B cell (primary cell): ENCODE measurements at regions of chr2 and their contacts with region 1.

Region 1: GRCh38 chr2:27086090-27086723 is 365 bp upstream of the KHK start:
- DNase-seq: peak; percentile 97
- ATAC-seq: peak; percentile 91
- H3K4me3 ChIP-seq: peak overlapping the region in 4 of 5 experiments; percentile 62 to 91 (median 71)
- H3K4me3 Mint-ChIP-seq: peak overlapping the region; percentile 91
- H3K27ac ChIP-seq: peak overlapping the region; percentile 68 to 81
- H3K27ac Mint-ChIP-seq: peak overlapping the region; percentile 90
- H3K4me1 ChIP-seq: peaks cover 20 to 30% of the 10 kb centered on the region in 2 donors
- H3K4me1 Mint-ChIP-seq: peaks cover 24% of the 10 kb centered on the region
- H3K27me3 ChIP-seq: no peaks in the 10 kb centered on the region
- H3K27me3 Mint-ChIP-seq: no peaks in the 10 kb centered on the region
- CTCF ChIP-seq: peak; percentile 85

Region 2: GRCh38 chr2:25497918-25498407 is 1588.2 kb before region 1 on chr2:
- CTCF ChIA-PET with region 1: no interaction called
- POLR2A ChIA-PET with region 1: no interaction called
- intact Hi-C with region 1: no loop called
- DNase-seq: no peak
- ATAC-seq: no peak
- H3K4me3 ChIP-seq: no peak overlapping the region
- H3K4me3 Mint-ChIP-seq: peak overlapping the region; percentile 16
- H3K27ac ChIP-seq: peak overlapping the region in 1 of 2 donors; percentile 62
- H3K27ac Mint-ChIP-seq: peak overlapping the region; percentile 61
- H3K4me1 ChIP-seq: peaks cover 13% of the 10 kb centered on the region in 2 donors
- H3K4me1 Mint-ChIP-seq: peaks cover 19% of the 10 kb centered on the region
- H3K27me3 ChIP-seq: no peaks in the 10 kb centered on the region
- H3K27me3 Mint-ChIP-seq: no peaks in the 10 kb centered on the region
- CTCF ChIP-seq: no peak

Region 3: DNA sequence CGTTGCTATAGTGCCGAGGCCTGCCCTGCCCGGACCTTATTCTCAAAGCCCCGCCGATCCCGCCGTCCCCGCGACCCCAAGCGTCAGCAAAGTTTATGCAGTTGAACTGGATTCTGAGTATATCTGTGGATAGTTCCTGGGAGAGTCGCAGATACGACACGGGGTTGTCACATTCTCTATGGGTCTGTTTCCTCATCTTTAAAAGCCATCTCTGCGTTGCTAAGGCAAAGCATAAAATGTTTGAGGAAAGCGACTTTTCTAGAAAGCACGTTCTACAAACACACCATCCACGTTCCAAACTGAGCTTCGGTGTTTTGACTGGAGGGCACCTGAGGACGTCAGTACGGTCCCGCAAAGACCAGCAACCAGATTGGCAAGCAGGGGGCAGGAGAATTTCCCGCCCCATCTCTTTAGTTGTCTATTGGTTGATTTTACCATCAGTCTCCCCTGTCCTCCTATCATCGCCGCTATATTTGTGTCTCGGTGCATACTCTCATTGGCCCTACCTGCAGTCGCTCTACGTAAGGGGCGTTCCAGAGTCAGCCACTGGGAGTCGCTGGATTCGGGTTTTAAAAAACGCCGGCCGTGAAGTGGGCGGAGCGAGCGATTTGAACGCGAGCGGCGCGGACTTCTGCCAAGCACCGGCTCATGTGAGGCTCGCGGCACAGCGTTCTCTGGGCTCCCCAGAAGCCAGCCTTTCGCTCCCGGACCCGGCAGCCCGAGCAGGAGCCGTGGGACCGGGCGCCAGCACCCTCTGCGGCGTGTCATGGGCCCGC is 300.6 kb before region 1 on chr2 and contains the start of gene CENPA:
- CTCF ChIA-PET with region 1: no interaction called
- POLR2A ChIA-PET with region 1: no interaction called
- intact Hi-C with region 1: loop called (anchors 10 kb)
- DNase-seq: peak; percentile 98
- ATAC-seq: peak; percentile 99
- H3K4me3 ChIP-seq: peak within 1 kb of the TSS; percentile 51 to 81 (median 71)
- H3K4me3 Mint-ChIP-seq: peak within 1 kb of the TSS; percentile 93
- H3K27ac ChIP-seq: peak within 1 kb of the TSS; percentile 27 to 41
- H3K27ac Mint-ChIP-seq: peak within 1 kb of the TSS; percentile 83
- H3K4me1 ChIP-seq: peaks cover 8 to 14% of the 10 kb centered on the region in 2 donors
- H3K4me1 Mint-ChIP-seq: peaks cover 13% of the 10 kb centered on the region
- H3K27me3 ChIP-seq: no peaks in the 10 kb centered on the region
- H3K27me3 Mint-ChIP-seq: peaks cover 3% of the 10 kb centered on the region
- CTCF ChIP-seq: peak; percentile 7
- total RNA-seq, gene CENPA: not detected in 2 replicates

Region 4: DNA sequence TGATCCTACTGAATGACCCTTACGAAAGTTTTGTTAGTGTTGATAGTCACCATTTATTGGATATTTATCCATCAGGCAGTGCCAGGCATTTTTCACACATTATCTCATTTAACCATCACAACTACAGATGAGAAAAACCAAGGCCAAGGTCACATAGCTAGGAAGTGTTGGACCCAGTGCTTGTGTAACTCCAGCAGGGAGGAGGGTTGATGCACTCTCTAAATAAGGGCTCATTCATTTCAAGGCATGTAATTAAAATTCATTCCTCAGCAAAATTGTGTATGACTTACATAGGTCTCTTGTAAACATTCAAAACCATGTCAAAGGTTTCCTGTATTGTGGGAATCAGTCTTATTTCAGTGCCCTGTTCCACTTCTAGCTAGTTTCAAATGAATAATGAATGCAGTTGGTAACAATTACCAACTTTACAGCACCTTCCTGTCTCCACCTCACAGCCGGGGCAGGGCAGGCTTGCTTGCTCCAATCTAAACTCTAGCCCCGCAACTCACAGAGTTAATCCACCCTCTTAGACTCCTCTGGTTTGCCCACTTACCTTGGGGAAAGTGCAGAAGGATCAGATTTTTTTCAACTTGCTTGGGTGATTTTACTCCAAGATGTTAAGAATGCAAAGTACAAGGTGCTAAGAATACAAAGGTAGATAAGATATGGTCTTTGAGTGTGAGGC is 121.6 kb before region 1 on chr2:
- CTCF ChIA-PET with region 1: interaction called, 14 read pairs
- POLR2A ChIA-PET with region 1: interaction called, 5 read pairs
- intact Hi-C with region 1: loop called (anchors 5 kb)
- DNase-seq: no peak
- ATAC-seq: no peak
- H3K4me3 ChIP-seq: no peak overlapping the region
- H3K4me3 Mint-ChIP-seq: no peak overlapping the region
- H3K27ac ChIP-seq: no peak overlapping the region
- H3K27ac Mint-ChIP-seq: no peak overlapping the region
- H3K4me1 ChIP-seq: no peaks in the 10 kb centered on the region
- H3K4me1 Mint-ChIP-seq: peaks cover 5% of the 10 kb centered on the region
- H3K27me3 ChIP-seq: peaks cover 2 to 14% (median 8%) of the 10 kb centered on the region in 4 experiments
- H3K27me3 Mint-ChIP-seq: peaks cover 39% of the 10 kb centered on the region
- CTCF ChIP-seq: no peak

Region 5: GRCh38 chr2:27050281-27050995 is 35.8 kb before region 1 on chr2:
- CTCF ChIA-PET with region 1: interaction called, 27 read pairs
- POLR2A ChIA-PET with region 1: interaction called, 15 read pairs
- intact Hi-C with region 1: loop called (anchors 1 kb)
- DNase-seq: peak; percentile 98
- ATAC-seq: peak; percentile 60
- H3K4me3 ChIP-seq: peak overlapping the region; percentile 57 to 94 (median 81)
- H3K4me3 Mint-ChIP-seq: peak overlapping the region; percentile 95
- H3K27ac ChIP-seq: peak overlapping the region; percentile 72 to 80
- H3K27ac Mint-ChIP-seq: peak overlapping the region; percentile 100
- H3K4me1 ChIP-seq: peaks cover 4 to 15% of the 10 kb centered on the region in 2 donors
- H3K4me1 Mint-ChIP-seq: peaks cover 17% of the 10 kb centered on the region
- H3K27me3 ChIP-seq: no peaks in the 10 kb centered on the region
- H3K27me3 Mint-ChIP-seq: peaks cover 7% of the 10 kb centered on the region
- CTCF ChIP-seq: peak; percentile 50

Region 6: DNA sequence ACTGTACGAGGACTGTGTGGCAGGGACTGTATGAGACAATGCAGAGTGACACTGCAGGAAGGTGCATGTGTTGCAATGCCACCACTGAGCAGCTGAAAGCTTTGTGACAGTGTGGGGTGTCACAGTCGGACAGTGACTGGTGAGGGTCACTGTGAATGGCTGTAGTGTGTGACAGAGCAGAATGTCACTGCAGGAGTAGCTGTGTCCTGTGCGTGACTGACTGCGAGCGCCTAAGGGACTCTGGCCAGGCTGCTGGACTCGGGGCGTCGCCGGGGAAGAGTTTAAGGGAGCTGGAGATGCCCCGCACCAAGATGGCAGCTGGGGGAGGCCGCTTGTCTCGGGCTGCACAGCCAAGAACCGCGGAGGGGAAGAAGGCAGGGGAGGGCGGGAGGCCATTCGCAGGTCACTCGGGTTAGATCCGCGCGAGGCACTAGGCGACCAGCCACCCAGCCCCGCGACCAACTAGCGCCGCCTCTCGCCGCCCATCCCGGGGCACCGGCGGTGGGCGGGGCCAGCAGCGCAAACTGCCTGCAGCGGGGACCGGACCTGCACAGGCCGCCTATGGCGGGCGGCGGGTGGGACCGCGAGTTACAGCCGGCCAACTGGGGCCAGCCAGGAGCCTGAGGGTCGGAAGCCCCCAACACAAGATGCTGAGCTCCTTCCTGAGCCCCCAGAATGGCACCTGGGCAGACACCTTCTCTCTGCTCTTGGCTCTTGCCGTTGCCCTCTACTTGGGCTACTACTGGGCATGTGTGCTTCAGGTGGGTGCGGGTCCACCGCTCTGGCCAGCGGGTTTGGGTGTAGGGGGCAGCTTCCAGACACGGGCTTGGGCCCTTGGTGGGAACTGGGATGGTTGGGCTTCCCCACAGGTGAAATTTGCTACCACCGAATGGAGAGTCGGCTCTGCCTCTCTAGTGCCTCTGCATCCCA is 37.4 kb after region 1 on chr2 and contains the start of gene ABHD1:
- CTCF ChIA-PET with region 1: interaction called, 3 read pairs
- POLR2A ChIA-PET with region 1: no interaction called
- intact Hi-C with region 1: loop called (anchors 1 kb)
- DNase-seq: peak; percentile 71
- ATAC-seq: peak; percentile 87
- H3K4me3 ChIP-seq: peak within 1 kb of the TSS; percentile 58 to 74 (median 68)
- H3K4me3 Mint-ChIP-seq: peak within 1 kb of the TSS; percentile 93
- H3K27ac ChIP-seq: no peak within 1 kb of the TSS
- H3K27ac Mint-ChIP-seq: peak within 1 kb of the TSS; percentile 87
- H3K4me1 ChIP-seq: peaks cover 17% of the 10 kb centered on the region in 2 donors
- H3K4me1 Mint-ChIP-seq: peaks cover 18% of the 10 kb centered on the region
- H3K27me3 ChIP-seq: peaks cover 0 to 16% (median 6%) of the 10 kb centered on the region in 4 experiments
- H3K27me3 Mint-ChIP-seq: peaks cover 32% of the 10 kb centered on the region
- CTCF ChIP-seq: no peak
- total RNA-seq, gene ABHD1: 0.73 and 1.5 TPM in 2 replicates

Region 7: GRCh38 chr2:27182346-27182745 is 96.1 kb after region 1 on chr2:
- CTCF ChIA-PET with region 1: no interaction called
- POLR2A ChIA-PET with region 1: no interaction called
- intact Hi-C with region 1: no loop called
- DNase-seq: no peak
- ATAC-seq: no peak
- H3K4me3 ChIP-seq: no peak overlapping the region
- H3K4me3 Mint-ChIP-seq: no peak overlapping the region
- H3K27ac ChIP-seq: no peak overlapping the region
- H3K27ac Mint-ChIP-seq: no peak overlapping the region
- H3K4me1 ChIP-seq: no peaks in the 10 kb centered on the region
- H3K4me1 Mint-ChIP-seq: no peaks in the 10 kb centered on the region
- H3K27me3 ChIP-seq: peaks cover 0 to 14% (median 6%) of the 10 kb centered on the region in 4 experiments
- H3K27me3 Mint-ChIP-seq: peaks cover 38% of the 10 kb centered on the region
- CTCF ChIP-seq: no peak

Region 8: GRCh38 chr2:27217217-27218121 is 131.3 kb after region 1 on chr2 and contains the start of gene CAD:
- CTCF ChIA-PET with region 1: interaction called, 3 read pairs
- POLR2A ChIA-PET with region 1: interaction called, 5 read pairs
- intact Hi-C with region 1: loop called (anchors 1 kb)
- DNase-seq: peak; percentile 89
- ATAC-seq: peak; percentile 86
- H3K4me3 ChIP-seq: peak within 1 kb of the TSS; percentile 11 to 85 (median 79)
- H3K4me3 Mint-ChIP-seq: peak within 1 kb of the TSS; percentile 98
- H3K27ac ChIP-seq: peak within 1 kb of the TSS; percentile 70 to 74
- H3K27ac Mint-ChIP-seq: peak within 1 kb of the TSS; percentile 87
- H3K4me1 ChIP-seq: peaks cover 28 to 33% of the 10 kb centered on the region in 2 donors
- H3K4me1 Mint-ChIP-seq: peaks cover 44% of the 10 kb centered on the region
- H3K27me3 ChIP-seq: no peaks in the 10 kb centered on the region
- H3K27me3 Mint-ChIP-seq: no peaks in the 10 kb centered on the region
- CTCF ChIP-seq: no peak
- total RNA-seq, gene CAD: 35.6 and 36.0 TPM in 2 replicates

Region 9: GRCh38 chr2:28870146-28870891 is 1784.1 kb after region 1 on chr2 and contains the start of gene TRMT61B:
- CTCF ChIA-PET with region 1: no interaction called
- POLR2A ChIA-PET with region 1: no interaction called
- intact Hi-C with region 1: loop called (anchors 10 kb)
- DNase-seq: peak; percentile 98
- ATAC-seq: peak; percentile 96
- H3K4me3 ChIP-seq: peak within 1 kb of the TSS; percentile 71 to 92 (median 90)
- H3K4me3 Mint-ChIP-seq: peak within 1 kb of the TSS; percentile 99
- H3K27ac ChIP-seq: peak within 1 kb of the TSS; percentile 85 to 94
- H3K27ac Mint-ChIP-seq: peak within 1 kb of the TSS; percentile 100
- H3K4me1 ChIP-seq: peaks cover 20 to 23% of the 10 kb centered on the region in 2 donors
- H3K4me1 Mint-ChIP-seq: peaks cover 29% of the 10 kb centered on the region
- H3K27me3 ChIP-seq: peaks cover 0 to 6% (median 0%) of the 10 kb centered on the region in 4 experiments
- H3K27me3 Mint-ChIP-seq: peaks cover 2% of the 10 kb centered on the region
- CTCF ChIP-seq: no peak
- total RNA-seq, gene TRMT61B: 20.3 and 23.0 TPM in 2 replicates